MCF 10A (cell line): ENCODE measurements at regions of chr17 and their contacts with region 1.

Region 1: GRCh38 chr17:68205251-68205807 is 42.5 kb upstream of the AMZ2 start:
- DNase-seq: peak; percentile 86
- H3K4me3 Mint-ChIP-seq: peak overlapping the region; percentile 77
- H3K27ac Mint-ChIP-seq: no peak overlapping the region
- H3K4me1 Mint-ChIP-seq: peaks cover 9% of the 10 kb centered on the region
- H3K27me3 Mint-ChIP-seq: peaks cover 4% of the 10 kb centered on the region
- CTCF ChIP-seq: peak; percentile 85

Region 2: GRCh38 chr17:68184816-68185436 is 20.4 kb before region 1 on chr17:
- CTCF ChIA-PET with region 1: interaction called, 10 read pairs
- POLR2A ChIA-PET with region 1: no interaction called
- intact Hi-C with region 1: no loop called
- DNase-seq: no peak
- H3K4me3 Mint-ChIP-seq: no peak overlapping the region
- H3K27ac Mint-ChIP-seq: no peak overlapping the region
- H3K4me1 Mint-ChIP-seq: peaks cover 7% of the 10 kb centered on the region
- H3K27me3 Mint-ChIP-seq: no peaks in the 10 kb centered on the region
- CTCF ChIP-seq: no peak